ENCODE measurements at regions of chr5 and their contacts with region 1.

Region 1: DNA sequence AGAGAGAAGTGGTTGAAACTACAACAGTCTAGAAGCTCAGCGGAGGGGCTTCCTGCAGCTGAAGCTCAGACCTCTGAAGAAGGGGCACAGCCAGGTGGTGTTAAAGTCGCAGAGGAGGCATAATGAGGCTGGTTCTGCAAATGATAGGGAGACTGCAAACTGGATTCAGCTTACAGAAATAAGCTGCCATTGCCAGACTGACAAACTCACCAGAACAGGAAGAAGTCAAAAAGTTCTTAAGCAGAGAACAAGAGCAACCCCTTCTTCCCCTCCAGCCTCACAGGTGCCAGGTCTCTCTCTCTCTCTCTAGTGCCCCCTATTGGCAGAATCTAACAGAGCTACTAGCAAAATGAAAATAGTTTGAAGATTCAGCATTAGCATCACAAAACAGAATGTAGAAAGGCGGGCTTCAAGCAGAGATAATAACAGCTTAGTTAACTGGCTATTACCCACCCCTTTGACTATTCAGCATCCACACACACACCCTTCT is 76.7 kb downstream of the GRAMD2B start:
- DNase-seq: peak; percentile 37
- CTCF ChIP-seq: peak; percentile 67

Region 2: GRCh38 chr5:126339215-126339805 is 160.6 kb before region 1 on chr5:
- CTCF ChIA-PET with region 1: interaction called, 34 read pairs
- POLR2A ChIA-PET with region 1: no interaction called
- DNase-seq: peak; percentile 43
- CTCF ChIP-seq: peak; percentile 84

Region 3: DNA sequence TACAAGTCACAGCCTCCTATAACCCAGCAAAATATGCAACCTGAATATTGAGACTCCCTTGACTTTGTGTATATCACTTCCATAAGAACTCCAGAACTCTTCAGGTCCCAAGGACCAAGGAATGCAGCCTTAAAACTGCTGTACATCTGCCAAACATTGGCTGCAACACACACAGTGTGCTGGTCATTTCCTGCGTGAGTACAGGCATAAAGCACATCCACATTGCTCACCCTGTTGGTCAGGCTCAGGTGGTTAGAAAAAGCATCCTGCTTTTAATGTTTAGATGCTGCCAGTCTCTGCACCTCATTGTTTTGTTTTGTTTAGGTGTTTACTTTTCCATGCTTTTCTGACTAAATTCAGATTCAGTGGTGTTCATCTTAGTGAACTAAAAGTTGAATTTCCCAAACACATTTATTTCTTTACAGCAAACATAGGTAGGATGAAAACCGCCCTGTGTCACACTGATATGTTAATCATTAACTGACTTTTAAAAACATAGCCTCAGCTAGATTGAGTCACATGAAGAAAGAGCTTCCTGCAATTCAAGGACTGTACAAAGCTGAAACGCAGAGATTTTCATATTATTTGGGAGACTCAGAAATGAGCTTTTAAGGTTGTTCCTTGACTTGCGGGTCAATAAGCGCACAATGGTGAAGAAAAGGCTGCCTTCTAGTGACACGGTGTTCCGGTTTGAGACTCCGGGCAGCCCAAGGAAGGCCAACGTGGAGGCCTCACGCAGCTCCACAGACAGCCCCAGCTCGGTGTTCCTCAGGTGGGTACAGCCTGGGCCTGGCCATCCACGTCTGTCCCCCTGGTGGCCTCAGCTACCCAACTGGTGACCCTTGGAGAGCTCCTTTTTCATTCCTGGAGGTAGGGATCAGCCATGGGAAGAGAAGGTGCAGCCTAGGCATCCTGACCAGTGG is 128.8 kb before region 1 on chr5:
- CTCF ChIA-PET with region 1: interaction called, 14 read pairs
- POLR2A ChIA-PET with region 1: no interaction called
- DNase-seq: no peak
- CTCF ChIP-seq: no peak

Region 4: GRCh38 chr5:126514131-126514557 is 14.2 kb after region 1 on chr5:
- CTCF ChIA-PET with region 1: interaction called, 16 read pairs
- POLR2A ChIA-PET with region 1: no interaction called
- DNase-seq: no peak
- CTCF ChIP-seq: no peak

Region 5: DNA sequence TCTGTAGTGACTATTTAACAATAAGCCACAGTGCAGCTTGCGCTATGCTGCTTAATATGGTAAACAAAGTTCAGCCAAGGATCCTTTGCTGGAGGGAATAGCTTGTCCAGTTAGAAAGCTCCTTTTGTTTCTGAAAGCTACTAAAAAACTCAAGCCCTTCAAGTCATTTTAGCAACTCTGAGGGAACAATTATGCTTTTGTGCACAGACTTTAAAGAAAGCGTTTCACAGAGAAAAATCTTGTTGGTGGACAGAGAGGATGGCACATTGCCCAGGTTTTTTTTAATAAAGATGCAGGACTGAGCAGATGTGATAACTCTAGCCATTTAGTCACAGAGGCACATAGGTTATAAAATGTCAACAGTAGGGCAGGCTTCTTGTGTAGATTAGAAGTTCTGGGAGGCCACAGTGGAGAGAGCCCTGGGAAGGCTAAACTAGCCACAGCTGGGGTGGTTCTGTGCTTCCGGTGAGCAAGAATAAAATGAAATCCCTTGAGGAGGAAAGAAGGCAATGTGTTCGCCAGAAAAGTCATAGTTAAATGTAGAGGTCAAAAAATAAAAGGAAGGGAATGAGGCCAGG is 31.7 kb after region 1 on chr5:
- CTCF ChIA-PET with region 1: interaction called, 20 read pairs
- POLR2A ChIA-PET with region 1: no interaction called
- DNase-seq: no peak
- CTCF ChIP-seq: no peak

Region 6: DNA sequence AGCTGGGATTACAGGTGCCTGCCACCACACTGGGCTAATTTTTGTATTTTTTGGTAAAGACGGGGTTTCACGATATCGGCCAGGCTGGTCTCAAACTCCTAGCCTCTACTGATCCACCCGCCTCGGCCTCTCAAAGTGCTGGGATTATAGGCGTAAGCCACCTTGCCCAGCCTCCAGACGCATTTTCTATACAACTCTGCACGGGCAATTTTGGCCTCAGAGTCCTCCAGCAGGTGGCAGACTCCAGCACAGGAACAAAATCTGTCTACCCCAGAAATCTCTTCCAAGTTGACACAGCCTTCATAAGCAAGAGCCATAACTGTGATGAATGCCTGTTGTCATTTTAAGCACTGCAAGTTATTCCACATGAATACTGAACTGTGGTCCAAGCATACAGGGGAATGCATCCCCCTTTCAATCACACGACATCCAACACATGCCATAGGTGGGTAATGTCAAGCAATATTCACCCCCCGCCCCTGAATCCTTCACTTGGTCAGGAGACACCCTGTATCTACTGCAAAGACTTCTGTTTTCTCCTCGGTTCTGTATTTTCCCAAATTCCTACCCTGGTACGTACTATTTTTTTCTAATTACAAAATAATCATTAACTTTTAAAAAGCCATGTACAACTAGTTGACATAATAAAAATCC is 44.3 kb after region 1 on chr5:
- CTCF ChIA-PET with region 1: interaction called, 11 read pairs
- POLR2A ChIA-PET with region 1: no interaction called
- DNase-seq: peak; percentile 56
- CTCF ChIP-seq: peak; percentile 68

Region 7: GRCh38 chr5:126676195-126676624 is 176.3 kb after region 1 on chr5:
- CTCF ChIA-PET with region 1: no interaction called
- POLR2A ChIA-PET with region 1: no interaction called
- DNase-seq: peak; percentile 86
- CTCF ChIP-seq: peak; percentile 73

Region 8: GRCh38 chr5:126808521-126808988 is 308.7 kb after region 1 on chr5:
- CTCF ChIA-PET with region 1: no interaction called
- POLR2A ChIA-PET with region 1: no interaction called
- DNase-seq: peak; percentile 47
- CTCF ChIP-seq: peak; percentile 35

Region 9: GRCh38 chr5:127068493-127069214 is 568.8 kb after region 1 on chr5:
- CTCF ChIA-PET with region 1: no interaction called
- POLR2A ChIA-PET with region 1: no interaction called
- DNase-seq: no peak
- CTCF ChIP-seq: no peak